Esophagus squamous epithelium (tissue), 5 donors: ENCODE measurements at regions of chr16 and their contacts with region 1.

Region 1: DNA sequence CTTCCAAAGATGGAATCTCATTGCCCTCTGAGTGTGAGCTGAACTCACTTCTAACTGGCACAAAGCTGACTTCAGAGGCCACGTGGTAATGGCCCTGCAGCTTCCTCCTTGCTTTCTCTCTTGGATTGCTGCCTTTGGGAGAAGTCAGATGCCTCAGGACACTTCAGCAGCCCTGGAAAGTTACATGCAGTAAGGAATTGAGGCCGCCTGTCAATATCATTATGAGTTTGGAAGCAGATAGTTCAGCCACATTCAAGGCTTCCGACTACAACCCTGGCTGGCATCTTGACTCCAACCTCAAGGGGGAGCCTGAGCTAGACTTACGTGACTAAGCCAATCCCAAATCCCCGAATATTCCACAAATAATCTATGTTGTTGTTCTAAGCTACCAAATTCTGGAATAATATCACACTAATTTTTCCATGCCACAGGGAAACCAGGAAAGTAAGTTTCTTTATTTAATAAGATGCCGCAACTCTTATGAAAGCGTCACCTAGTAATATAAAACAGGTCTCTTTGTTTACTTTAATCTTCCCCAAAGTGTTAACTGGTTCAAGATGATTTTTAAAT is 13.6 kb downstream of the CEP20 start:
- DNase-seq: no peak
- H3K4me3 ChIP-seq: no peak overlapping the region
- H3K27ac ChIP-seq: peak overlapping the region; percentile 45 to 71 (median 59)
- H3K4me1 ChIP-seq: peaks cover 0 to 38% (median 12%) of the 10 kb centered on the region in 3 donors
- H3K27me3 ChIP-seq: no peaks in the 10 kb centered on the region
- CTCF ChIP-seq: peak; percentile 39 to 75 (median 65)
- POLR2A ChIP-seq: no peak

Region 2: GRCh38 chr16:16127469-16128116 is 252.8 kb after region 1 on chr16:
- intact Hi-C with region 1: loop called (anchors 5 kb)
- DNase-seq: no peak
- H3K4me3 ChIP-seq: no peak overlapping the region
- H3K27ac ChIP-seq: peak overlapping the region in 3 of 4 donors; percentile 56 to 75 (median 69)
- H3K4me1 ChIP-seq: peaks cover 0 to 4% (median 0%) of the 10 kb centered on the region in 3 donors
- H3K27me3 ChIP-seq: no peaks in the 10 kb centered on the region
- CTCF ChIP-seq: peak; percentile 69 to 94 (median 89)
- POLR2A ChIP-seq: no peak